CD8-positive, alpha-beta memory T cell (primary cell): ENCODE measurements at regions of chr1 and their contacts with region 1.

Region 1: GRCh38 chr1:156480411-156481192 is 20.0 kb downstream of the MEF2D start:
- DNase-seq: peak; percentile 74 to 88 (median 76)
- H3K4me3 ChIP-seq: peak overlapping the region; percentile 19
- H3K4me3 Mint-ChIP-seq: peak overlapping the region in 6 of 7 donors; percentile 28 to 76 (median 50)
- H3K27ac ChIP-seq: peak overlapping the region; percentile 21
- H3K27ac Mint-ChIP-seq: peak overlapping the region; percentile 40 to 96 (median 92)
- H3K4me1 ChIP-seq: peaks cover 34% of the 10 kb centered on the region
- H3K4me1 Mint-ChIP-seq: peaks cover 43 to 62% (median 55%) of the 10 kb centered on the region in 3 donors
- H3K27me3 ChIP-seq: no peaks in the 10 kb centered on the region
- H3K27me3 Mint-ChIP-seq: no peaks in the 10 kb centered on the region

Region 2: DNA sequence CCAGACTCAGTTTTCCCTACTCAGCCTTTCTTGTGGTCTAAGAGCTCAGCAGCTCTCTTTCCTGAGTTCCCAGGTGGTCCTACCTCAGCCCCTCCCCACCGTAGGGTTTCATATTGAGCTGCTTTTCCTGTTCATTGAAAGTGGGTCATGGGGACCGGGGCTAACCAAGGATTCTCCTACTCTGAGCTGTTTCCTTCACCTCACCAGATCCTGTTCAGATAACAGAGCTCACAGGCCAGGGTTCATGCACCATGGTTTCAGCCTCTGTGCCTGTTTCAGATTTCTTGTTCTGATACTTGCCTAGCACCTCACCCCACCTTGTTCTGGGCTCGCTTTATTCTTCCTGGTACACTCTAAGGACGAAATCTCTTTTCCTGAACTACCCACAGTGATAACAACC is 435.5 kb before region 1 on chr1:
- CTCF ChIA-PET with region 1: no interaction called
- POLR2A ChIA-PET with region 1: no interaction called
- DNase-seq: no peak
- H3K4me3 ChIP-seq: no peak overlapping the region
- H3K4me3 Mint-ChIP-seq: peak overlapping the region in 4 of 7 donors; percentile 1 to 30 (median 12)
- H3K27ac ChIP-seq: no peak overlapping the region
- H3K27ac Mint-ChIP-seq: peak overlapping the region in 7 of 8 donors; percentile 7 to 95 (median 70)
- H3K4me1 ChIP-seq: peaks cover 5% of the 10 kb centered on the region
- H3K4me1 Mint-ChIP-seq: peaks cover 7 to 13% (median 12%) of the 10 kb centered on the region in 3 donors
- H3K27me3 ChIP-seq: no peaks in the 10 kb centered on the region
- H3K27me3 Mint-ChIP-seq: no peaks in the 10 kb centered on the region

Region 3: DNA sequence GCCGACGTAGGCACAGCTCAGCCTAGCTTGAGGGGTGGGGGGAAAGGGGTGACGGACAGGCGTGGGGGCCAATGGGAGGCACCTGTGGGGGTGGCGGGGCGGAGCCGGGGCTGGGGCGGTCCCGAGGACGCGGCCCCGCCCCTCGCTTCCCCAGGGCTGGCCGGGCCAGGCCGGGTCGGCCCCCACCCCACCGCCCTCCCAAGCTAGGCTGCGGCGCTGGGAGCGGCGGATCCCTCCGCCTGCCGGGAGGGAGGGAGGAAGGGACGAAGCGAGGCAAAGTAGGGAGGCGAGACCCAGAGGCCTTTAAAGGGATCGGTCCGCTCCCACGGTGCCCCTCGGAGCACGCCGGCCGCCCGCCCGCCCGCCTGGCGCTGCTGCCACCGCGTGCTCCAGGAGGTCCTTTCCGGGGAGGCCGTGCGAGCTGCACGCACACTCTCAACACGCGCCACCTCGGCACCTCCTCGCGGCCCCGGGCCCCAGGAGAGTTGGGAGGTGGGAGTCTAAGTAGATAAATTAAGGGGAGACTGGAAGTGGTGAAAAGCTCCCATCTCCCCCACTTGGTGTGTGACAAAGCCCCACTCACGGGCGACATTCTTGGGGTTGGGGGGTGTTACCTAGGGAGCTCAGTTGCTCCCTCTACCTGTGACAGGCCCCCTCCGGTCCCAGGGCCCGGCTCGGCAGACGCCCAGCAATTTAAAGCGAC is 20.3 kb after region 1 on chr1:
- CTCF ChIA-PET with region 1: interaction called, 177 read pairs
- POLR2A ChIA-PET with region 1: interaction called, 29 read pairs
- DNase-seq: peak; percentile 90 to 97 (median 94)
- H3K4me3 ChIP-seq: peak overlapping the region; percentile 79
- H3K4me3 Mint-ChIP-seq: peak overlapping the region; percentile 81 to 98 (median 93)
- H3K27ac ChIP-seq: peak overlapping the region; percentile 95
- H3K27ac Mint-ChIP-seq: peak overlapping the region; percentile 98 to 100 (median 99)
- H3K4me1 ChIP-seq: peaks cover 77% of the 10 kb centered on the region
- H3K4me1 Mint-ChIP-seq: peaks cover 75 to 79% (median 78%) of the 10 kb centered on the region in 3 donors
- H3K27me3 ChIP-seq: no peaks in the 10 kb centered on the region
- H3K27me3 Mint-ChIP-seq: peaks cover 0 to 7% of the 10 kb centered on the region in 2 donors

Region 4: DNA sequence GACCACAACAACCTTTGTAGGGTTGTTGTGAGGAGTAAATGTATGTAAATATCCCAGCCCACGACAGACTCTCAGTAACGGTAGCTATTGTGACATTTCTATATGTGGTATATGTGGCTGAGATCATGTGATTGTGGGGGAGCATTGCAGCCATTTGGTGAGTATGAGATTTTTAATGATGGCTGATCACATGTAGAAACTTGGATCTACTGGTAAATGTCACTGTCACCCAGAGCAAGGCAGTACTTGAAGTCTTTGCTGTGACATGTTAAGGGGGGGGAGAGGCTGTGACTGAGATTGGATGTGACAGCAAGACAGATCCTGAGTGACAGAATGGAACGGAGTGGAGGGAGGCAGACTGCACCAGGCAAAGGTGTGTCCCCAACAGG is 43.9 kb after region 1 on chr1:
- CTCF ChIA-PET with region 1: interaction called, 10 read pairs
- POLR2A ChIA-PET with region 1: interaction called, 3 read pairs
- DNase-seq: peak in 3 of 5 donors; percentile 39 to 52 (median 44)
- H3K4me3 ChIP-seq: peak overlapping the region; percentile 27
- H3K4me3 Mint-ChIP-seq: peak overlapping the region in 6 of 7 donors; percentile 47 to 86 (median 65)
- H3K27ac ChIP-seq: peak overlapping the region; percentile 49
- H3K27ac Mint-ChIP-seq: peak overlapping the region; percentile 32 to 93 (median 84)
- H3K4me1 ChIP-seq: peaks cover 31% of the 10 kb centered on the region
- H3K4me1 Mint-ChIP-seq: peaks cover 32 to 45% (median 33%) of the 10 kb centered on the region in 3 donors
- H3K27me3 ChIP-seq: no peaks in the 10 kb centered on the region
- H3K27me3 Mint-ChIP-seq: peaks cover 0 to 1% of the 10 kb centered on the region in 2 donors

Region 5: DNA sequence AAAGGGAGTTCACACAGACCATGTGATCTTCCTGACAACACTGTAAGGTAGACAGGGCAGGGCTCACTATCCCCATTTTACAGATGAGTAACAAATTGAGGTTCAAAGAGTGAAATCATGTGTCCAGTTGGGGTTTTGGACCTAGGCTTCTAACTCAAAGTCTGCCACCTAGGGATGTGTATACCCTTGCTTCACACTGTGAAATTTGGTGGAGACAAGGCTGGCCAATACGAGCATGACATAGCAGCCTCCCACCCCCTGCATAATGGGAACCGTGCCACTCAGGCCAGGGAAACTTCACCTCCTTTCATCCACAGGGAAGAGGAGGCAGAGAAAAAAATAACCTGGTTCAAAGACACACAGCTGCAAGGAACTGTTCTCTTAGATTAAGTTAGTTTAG is 84.9 kb after region 1 on chr1:
- CTCF ChIA-PET with region 1: no interaction called
- POLR2A ChIA-PET with region 1: no interaction called
- DNase-seq: no peak
- H3K4me3 ChIP-seq: no peak overlapping the region
- H3K4me3 Mint-ChIP-seq: no peak overlapping the region
- H3K27ac ChIP-seq: no peak overlapping the region
- H3K27ac Mint-ChIP-seq: peak overlapping the region in 1 of 8 donors; percentile 37
- H3K4me1 ChIP-seq: no peaks in the 10 kb centered on the region
- H3K4me1 Mint-ChIP-seq: no peaks in the 10 kb centered on the region
- H3K27me3 ChIP-seq: no peaks in the 10 kb centered on the region
- H3K27me3 Mint-ChIP-seq: no peaks in the 10 kb centered on the region

Region 6: GRCh38 chr1:156591432-156592157 is 111.0 kb after region 1 on chr1 and contains the start of gene NAXE:
- CTCF ChIA-PET with region 1: interaction called, 22 read pairs
- POLR2A ChIA-PET with region 1: interaction called, 3 read pairs
- DNase-seq: peak; percentile 64 to 78 (median 70)
- H3K4me3 ChIP-seq: peak within 1 kb of the TSS; percentile 70
- H3K4me3 Mint-ChIP-seq: peak within 1 kb of the TSS; percentile 89 to 94 (median 91)
- H3K27ac ChIP-seq: peak within 1 kb of the TSS; percentile 67
- H3K27ac Mint-ChIP-seq: peak within 1 kb of the TSS; percentile 90 to 98 (median 96)
- H3K4me1 ChIP-seq: peaks cover 20% of the 10 kb centered on the region
- H3K4me1 Mint-ChIP-seq: peaks cover 20 to 24% (median 21%) of the 10 kb centered on the region in 3 donors
- H3K27me3 ChIP-seq: no peaks in the 10 kb centered on the region
- H3K27me3 Mint-ChIP-seq: no peaks in the 10 kb centered on the region
- total RNA-seq, gene NAXE: 63.0 to 69.1 TPM

Region 7: GRCh38 chr1:156608036-156608674 is 127.6 kb after region 1 on chr1:
- CTCF ChIA-PET with region 1: interaction called, 20 read pairs
- POLR2A ChIA-PET with region 1: interaction called, 5 read pairs
- DNase-seq: peak; percentile 32 to 73 (median 62)
- H3K4me3 ChIP-seq: no peak overlapping the region
- H3K4me3 Mint-ChIP-seq: peak overlapping the region in 2 of 7 donors; percentile 25 to 41
- H3K27ac ChIP-seq: no peak overlapping the region
- H3K27ac Mint-ChIP-seq: no peak overlapping the region
- H3K4me1 ChIP-seq: peaks cover 10% of the 10 kb centered on the region
- H3K4me1 Mint-ChIP-seq: peaks cover 6 to 15% (median 9%) of the 10 kb centered on the region in 3 donors
- H3K27me3 ChIP-seq: no peaks in the 10 kb centered on the region
- H3K27me3 Mint-ChIP-seq: peaks cover 5 to 26% of the 10 kb centered on the region in 2 donors

Region 8: GRCh38 chr1:156993446-156994147 is 513.0 kb after region 1 on chr1:
- CTCF ChIA-PET with region 1: no interaction called
- POLR2A ChIA-PET with region 1: no interaction called
- DNase-seq: no peak
- H3K4me3 ChIP-seq: no peak overlapping the region
- H3K4me3 Mint-ChIP-seq: no peak overlapping the region
- H3K27ac ChIP-seq: no peak overlapping the region
- H3K27ac Mint-ChIP-seq: no peak overlapping the region
- H3K4me1 ChIP-seq: no peaks in the 10 kb centered on the region
- H3K4me1 Mint-ChIP-seq: no peaks in the 10 kb centered on the region
- H3K27me3 ChIP-seq: no peaks in the 10 kb centered on the region
- H3K27me3 Mint-ChIP-seq: peaks cover 8 to 32% of the 10 kb centered on the region in 2 donors